ENCODE measurements at regions of chr11 and their contacts with region 1.

Region 1: DNA sequence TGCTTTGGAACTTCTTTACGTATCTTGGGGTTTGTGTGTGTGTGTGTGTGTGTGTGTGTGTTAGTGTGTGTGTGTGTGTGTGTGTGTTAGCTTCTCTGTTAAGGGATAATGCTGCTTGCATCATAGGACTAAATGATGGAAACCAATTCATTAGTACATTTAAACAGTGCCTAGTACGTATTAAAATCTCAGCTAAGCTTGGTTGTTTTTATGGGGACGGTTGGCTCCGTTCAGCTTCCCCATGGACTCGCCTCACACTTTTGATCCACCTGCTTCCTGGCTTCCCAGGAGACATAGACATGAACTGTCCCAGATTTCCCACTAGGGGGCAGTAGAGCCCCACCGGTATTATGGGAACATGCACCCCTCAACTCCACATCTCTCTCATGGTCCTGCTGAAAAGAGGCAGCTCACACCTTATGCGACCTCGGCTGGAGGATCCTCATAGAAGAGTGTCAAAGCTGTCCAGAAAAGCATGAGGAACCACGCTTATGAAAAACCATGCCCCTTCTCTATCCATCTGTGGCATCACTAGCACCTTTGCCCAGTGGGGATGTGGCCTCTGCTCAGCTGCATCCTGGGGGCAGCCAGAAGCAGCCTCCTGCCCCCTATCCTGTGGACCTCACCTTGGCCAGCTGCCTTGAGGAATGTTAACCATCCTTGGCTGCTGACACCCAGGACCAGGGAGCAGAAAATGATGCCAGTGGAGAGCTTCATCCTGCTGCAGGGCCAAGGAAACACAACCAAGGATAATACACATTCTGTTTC is 9.7 kb upstream of the SAAL1 start:
- DNase-seq: no peak
- H3K4me3 ChIP-seq: no peak overlapping the region
- CTCF ChIP-seq: peak; percentile 83

Region 2: DNA sequence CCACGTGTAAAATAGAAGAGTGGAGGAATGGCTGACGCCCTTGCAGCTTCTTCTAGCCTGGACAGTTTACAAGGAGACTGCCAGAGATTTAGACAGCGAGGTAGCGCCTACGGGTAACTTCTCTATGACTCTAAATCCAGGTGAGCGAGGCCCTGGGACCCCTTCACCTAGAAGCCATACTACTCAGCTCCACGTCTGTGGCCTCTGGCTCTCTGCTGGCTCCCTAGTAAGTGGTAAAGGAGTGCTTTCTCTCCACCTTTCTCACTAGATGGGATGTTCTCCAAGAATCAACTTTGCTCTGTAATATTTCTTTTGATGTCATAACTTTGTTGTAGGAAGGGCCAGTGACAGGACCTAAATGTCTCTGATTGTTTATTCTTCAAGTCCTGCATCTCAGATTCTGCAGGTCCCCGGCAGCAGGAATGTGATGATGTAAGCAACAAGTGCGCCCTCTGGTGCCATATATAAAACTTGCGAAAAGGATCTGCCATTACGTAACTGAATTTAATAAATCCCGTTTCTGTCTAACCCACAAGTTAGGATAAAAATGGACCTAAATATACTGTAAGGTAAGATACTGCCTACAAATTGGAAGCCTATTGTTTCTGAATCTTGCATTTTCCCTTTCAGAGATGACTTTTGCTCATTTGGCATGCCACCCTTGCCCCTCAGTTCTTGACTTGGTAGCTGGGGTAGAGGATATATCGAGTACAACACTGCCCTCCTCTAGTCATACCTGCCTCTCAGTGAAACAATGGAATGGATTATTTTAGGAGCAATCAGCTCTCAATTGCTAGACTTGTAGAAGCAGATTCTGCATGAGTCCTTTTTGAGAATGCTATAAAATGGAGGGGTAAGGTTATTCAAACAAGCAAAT is 687.1 kb after region 1 on chr11:
- CTCF ChIA-PET with region 1: interaction called, 13 read pairs
- POLR2A ChIA-PET with region 1: no interaction called
- DNase-seq: peak; percentile 34
- H3K4me3 ChIP-seq: no peak overlapping the region
- CTCF ChIP-seq: peak; percentile 47

Measured in AG04449 (cell line).